ENCODE measurements at regions of chr13 and their contacts with region 1.

Region 1: DNA sequence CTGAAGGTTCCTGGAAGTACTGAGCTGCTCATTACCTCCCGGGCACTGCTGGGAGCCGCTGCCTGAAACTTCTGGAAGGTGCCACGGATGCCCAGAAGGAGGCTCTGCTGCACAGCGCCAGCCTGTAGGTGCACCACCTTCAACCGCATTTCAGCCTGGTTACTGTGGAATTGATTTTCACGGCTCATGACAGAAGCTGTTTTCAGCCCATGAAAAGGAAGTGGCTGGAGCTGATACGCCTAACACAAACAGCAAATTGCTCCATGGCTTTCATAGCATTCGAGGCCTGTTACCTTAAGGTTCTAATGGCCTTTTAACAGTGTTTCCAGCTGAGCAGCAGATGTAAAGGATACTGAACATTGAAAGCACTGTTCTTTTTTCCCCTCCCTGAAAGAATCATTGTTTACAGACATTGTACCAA is 22.0 kb downstream of the GPC6 start:
- DNase-seq: peak; percentile 56
- H3K4me3 ChIP-seq: no peak overlapping the region; a peak in 1 of 4 replicates
- H3K27ac ChIP-seq: peak overlapping the region; percentile 92 to 95
- H3K4me1 ChIP-seq: peaks cover 18 to 22% of the 10 kb centered on the region in 2 experiments
- H3K27me3 ChIP-seq: no peaks in the 10 kb centered on the region
- CTCF ChIP-seq: peak; percentile 64
- EP300 ChIP-seq: peak in 1 of 2 experiments; percentile 78; a peak in 2 of 4 replicates
- RAD21 ChIP-seq: peak; percentile 90

Region 2: GRCh38 chr13:93233997-93234416 is 14.6 kb before region 1 on chr13:
- CTCF ChIA-PET with region 1: interaction called, 10 read pairs
- POLR2A ChIA-PET with region 1: interaction called, 3 read pairs
- DNase-seq: no peak
- H3K4me3 ChIP-seq: no peak overlapping the region
- H3K27ac ChIP-seq: no peak overlapping the region
- H3K4me1 ChIP-seq: peaks cover 7 to 28% of the 10 kb centered on the region in 2 experiments; a peak in 3 of 4 replicates
- H3K27me3 ChIP-seq: no peaks in the 10 kb centered on the region
- CTCF ChIP-seq: no peak; the same call in 1 of the 2 replicates
- EP300 ChIP-seq: no peak
- RAD21 ChIP-seq: no peak

Region 3: DNA sequence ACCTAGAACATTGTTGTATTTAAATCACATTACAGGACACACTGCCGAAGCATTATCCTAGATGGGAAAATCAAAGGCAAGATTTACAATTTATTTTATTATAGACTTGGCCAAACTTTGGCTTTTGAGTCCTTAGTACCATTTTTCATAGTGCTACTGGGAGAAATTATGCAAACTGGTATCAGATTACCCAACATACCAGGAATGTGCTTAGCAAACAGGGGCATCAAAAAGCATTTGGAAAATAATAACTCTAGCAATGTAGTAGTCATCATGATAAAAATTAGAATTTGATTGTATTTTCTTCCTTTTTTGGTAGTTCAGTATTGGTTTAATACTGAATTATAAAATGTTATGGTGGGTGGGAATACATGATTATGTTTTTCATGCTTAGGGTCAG is 12.0 kb after region 1 on chr13:
- CTCF ChIA-PET with region 1: interaction called, 11 read pairs
- POLR2A ChIA-PET with region 1: interaction called, 3 read pairs
- DNase-seq: no peak
- H3K4me3 ChIP-seq: no peak overlapping the region
- H3K27ac ChIP-seq: no peak overlapping the region
- H3K4me1 ChIP-seq: peaks cover 0 to 27% of the 10 kb centered on the region in 2 experiments; a peak in 3 of 4 replicates
- H3K27me3 ChIP-seq: no peaks in the 10 kb centered on the region
- CTCF ChIP-seq: no peak
- EP300 ChIP-seq: peak in 1 of 2 experiments; percentile 41; a peak in 1 of 4 replicates
- RAD21 ChIP-seq: no peak

Region 4: GRCh38 chr13:94362411-94362909 is 1113.8 kb after region 1 on chr13:
- CTCF ChIA-PET with region 1: interaction called, 16 read pairs
- POLR2A ChIA-PET with region 1: no interaction called
- DNase-seq: peak; percentile 81
- H3K4me3 ChIP-seq: no peak overlapping the region
- H3K27ac ChIP-seq: no peak overlapping the region
- H3K4me1 ChIP-seq: no peaks in the 10 kb centered on the region; a peak in 2 of 4 replicates
- H3K27me3 ChIP-seq: no peaks in the 10 kb centered on the region
- CTCF ChIP-seq: peak; percentile 94
- EP300 ChIP-seq: 0 out of 4 replicates have a peak, but pooled peaks of 1 of the 2 experiments have one; percentile 20
- RAD21 ChIP-seq: peak; percentile 98

Measured in SK-N-SH (cell line).